ENCODE measurements at regions of chr15 and their contacts with region 1.

Region 1: GRCh38 chr15:52078876-52079700 is 33.5 kb downstream of the BCL2L10 start:
- DNase-seq: peak; percentile 93
- H3K4me3 Mint-ChIP-seq: no peak overlapping the region
- H3K27ac Mint-ChIP-seq: no peak overlapping the region
- H3K4me1 Mint-ChIP-seq: peaks cover 2% of the 10 kb centered on the region
- H3K27me3 Mint-ChIP-seq: no peaks in the 10 kb centered on the region

Region 2: DNA sequence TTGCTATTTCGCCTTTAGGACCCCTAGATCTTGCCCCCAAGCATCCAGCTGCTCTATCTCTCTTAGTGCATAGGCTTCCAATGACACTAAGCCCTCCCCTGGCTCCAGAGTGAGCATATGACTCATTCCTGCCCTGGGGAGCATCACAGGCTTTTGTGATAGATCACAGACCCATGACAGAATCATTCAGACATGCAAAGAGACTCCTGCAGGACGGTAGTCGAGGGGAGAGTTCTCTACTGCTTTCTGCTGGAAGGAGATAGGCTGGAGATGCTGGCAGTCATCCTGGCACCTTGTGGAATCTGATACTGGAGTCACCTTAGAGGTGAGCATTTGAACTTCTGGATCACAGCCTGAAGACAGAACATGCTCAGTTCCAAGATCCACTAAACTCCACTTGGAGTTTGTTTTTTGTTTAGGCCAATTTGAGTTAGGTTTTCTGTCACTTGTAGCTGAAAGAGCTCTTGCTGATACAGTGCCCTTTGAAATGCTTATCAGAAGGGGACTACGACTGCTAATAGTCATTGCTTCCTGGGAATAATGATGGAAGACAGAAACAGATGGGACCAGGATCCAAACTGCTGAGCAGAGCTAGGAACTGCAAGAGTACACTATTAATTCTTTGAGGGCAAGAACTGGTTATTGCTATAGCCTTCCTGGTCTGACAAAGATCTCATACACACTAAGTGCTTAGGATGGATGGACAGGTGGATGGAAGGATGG is 352.6 kb before region 1 on chr15:
- CTCF ChIA-PET with region 1: no interaction called
- intact Hi-C with region 1: no loop called
- DNase-seq: peak; percentile 74
- H3K4me3 Mint-ChIP-seq: no peak overlapping the region
- H3K27ac Mint-ChIP-seq: no peak overlapping the region
- H3K4me1 Mint-ChIP-seq: peaks cover 57% of the 10 kb centered on the region
- H3K27me3 Mint-ChIP-seq: no peaks in the 10 kb centered on the region

Region 3: GRCh38 chr15:51888593-51889195 is 190.4 kb before region 1 on chr15:
- CTCF ChIA-PET with region 1: interaction called, 3 read pairs
- intact Hi-C with region 1: loop called (anchors 2 kb)
- DNase-seq: no peak
- H3K4me3 Mint-ChIP-seq: no peak overlapping the region
- H3K27ac Mint-ChIP-seq: no peak overlapping the region
- H3K4me1 Mint-ChIP-seq: peaks cover 2% of the 10 kb centered on the region
- H3K27me3 Mint-ChIP-seq: no peaks in the 10 kb centered on the region

Region 4: GRCh38 chr15:51971375-51972133 is 107.5 kb before region 1 on chr15 and contains the start of gene LEO1:
- CTCF ChIA-PET with region 1: interaction called, 11 read pairs
- intact Hi-C with region 1: no loop called
- DNase-seq: peak; percentile 95
- H3K4me3 Mint-ChIP-seq: peak within 1 kb of the TSS; percentile 90
- H3K27ac Mint-ChIP-seq: peak within 1 kb of the TSS; percentile 96
- H3K4me1 Mint-ChIP-seq: peaks cover 24% of the 10 kb centered on the region
- H3K27me3 Mint-ChIP-seq: peaks cover 2% of the 10 kb centered on the region
- total RNA-seq, gene LEO1: 21.0 to 23.8 TPM

Region 5: DNA sequence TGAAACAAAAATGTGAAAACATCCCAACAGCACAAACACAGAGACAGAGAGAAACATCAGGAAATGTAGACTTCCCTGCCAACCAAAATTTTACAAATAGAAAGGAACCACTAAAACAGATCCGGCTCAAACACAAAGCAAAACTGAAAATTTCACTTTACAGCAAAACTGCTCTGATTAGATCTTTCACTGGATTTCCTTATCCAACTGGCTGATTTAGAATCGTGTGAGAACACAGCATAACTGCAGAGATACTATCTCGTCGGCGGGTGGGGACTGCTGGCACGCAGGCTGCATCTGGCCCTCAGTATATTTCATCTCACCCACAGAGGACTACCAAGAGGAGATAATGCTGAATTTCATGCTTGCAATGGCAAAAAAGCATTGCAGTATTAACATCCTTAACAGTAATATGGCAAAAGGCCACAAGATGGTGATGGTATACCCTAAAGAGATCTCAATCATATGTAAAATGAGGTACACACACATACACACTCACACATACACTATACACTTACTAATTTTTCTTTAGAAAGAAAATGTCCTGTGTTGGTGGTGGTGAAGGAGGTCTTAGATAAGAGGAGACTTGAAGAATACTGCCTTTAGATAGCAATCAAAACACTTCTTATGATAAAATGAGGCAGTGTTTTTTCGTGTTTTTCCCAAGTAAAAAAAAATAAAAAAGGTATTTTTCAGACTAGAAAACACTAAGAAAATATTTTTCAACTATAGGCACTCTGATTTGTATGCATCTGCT is 96.9 kb before region 1 on chr15:
- CTCF ChIA-PET with region 1: interaction called, 53 read pairs
- intact Hi-C with region 1: loop called (anchors 1 kb)
- DNase-seq: peak; percentile 52
- H3K4me3 Mint-ChIP-seq: peak overlapping the region; percentile 62
- H3K27ac Mint-ChIP-seq: peak overlapping the region; percentile 25
- H3K4me1 Mint-ChIP-seq: peaks cover 10% of the 10 kb centered on the region
- H3K27me3 Mint-ChIP-seq: no peaks in the 10 kb centered on the region

Region 6: DNA sequence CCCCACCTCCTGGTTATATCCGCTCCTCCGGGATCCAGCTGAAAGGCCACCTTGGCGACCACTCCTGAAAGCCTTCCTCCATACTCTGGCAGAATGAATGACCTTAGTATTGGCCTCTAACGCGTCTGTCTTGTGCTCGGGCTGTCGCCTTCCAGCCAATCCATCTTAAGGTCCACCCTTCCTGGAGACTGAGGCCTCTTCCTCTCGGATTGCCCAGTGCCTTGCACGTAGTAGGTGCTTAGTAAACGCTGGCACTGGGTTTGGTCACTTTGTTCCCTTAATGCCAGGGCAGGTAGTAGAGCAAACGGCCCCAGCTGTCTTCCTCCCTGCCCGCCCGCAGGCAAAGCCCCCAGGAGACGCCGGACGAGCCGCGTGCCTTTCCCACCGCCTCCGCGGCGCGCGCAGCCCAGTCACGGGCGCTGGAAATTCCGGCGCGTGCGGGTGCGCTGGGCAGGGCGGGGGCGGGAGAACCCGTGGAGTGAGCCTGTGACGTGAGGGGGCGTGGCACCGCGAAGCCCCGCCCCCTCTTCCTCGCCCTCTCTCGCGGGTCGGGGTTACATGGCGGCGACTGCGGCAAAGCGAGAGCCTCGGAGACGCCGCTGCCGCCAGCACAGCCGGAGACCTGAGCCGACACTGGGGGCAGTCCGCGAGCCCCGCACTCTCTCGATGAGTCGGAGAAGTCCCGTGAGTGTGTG is 60.2 kb before region 1 on chr15 and contains the start of gene MAPK6:
- CTCF ChIA-PET with region 1: no interaction called
- intact Hi-C with region 1: no loop called
- DNase-seq: peak; percentile 93
- H3K4me3 Mint-ChIP-seq: peak within 1 kb of the TSS; percentile 97
- H3K27ac Mint-ChIP-seq: peak within 1 kb of the TSS; percentile 97
- H3K4me1 Mint-ChIP-seq: peaks cover 37% of the 10 kb centered on the region
- H3K27me3 Mint-ChIP-seq: no peaks in the 10 kb centered on the region
- total RNA-seq, gene MAPK6: 16.7 to 17.2 TPM

Region 7: DNA sequence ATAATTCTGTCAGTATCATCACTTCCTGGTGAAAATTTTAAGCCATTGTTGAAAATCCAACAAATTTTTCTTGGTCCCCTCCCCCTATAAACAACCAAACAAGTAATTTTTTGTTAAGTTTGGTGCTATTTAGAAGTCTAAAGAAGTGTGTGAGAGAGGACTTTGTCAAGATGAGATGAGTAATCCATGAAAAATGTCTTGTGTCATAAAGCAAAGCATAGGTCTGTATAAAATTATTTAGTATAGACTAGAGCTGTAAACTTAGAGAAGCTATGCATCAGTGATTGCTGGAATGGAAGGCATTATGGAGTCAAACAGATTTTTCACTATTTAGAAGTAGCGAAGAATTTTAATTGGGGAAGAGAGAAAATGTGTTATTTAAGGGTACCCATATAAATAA is 28.7 kb before region 1 on chr15:
- CTCF ChIA-PET with region 1: interaction called, 5 read pairs
- intact Hi-C with region 1: loop called (anchors 2 kb)
- DNase-seq: no peak
- H3K4me3 Mint-ChIP-seq: no peak overlapping the region
- H3K27ac Mint-ChIP-seq: no peak overlapping the region
- H3K4me1 Mint-ChIP-seq: peaks cover 15% of the 10 kb centered on the region
- H3K27me3 Mint-ChIP-seq: no peaks in the 10 kb centered on the region

Region 8: GRCh38 chr15:52068004-52068615 is 11.0 kb before region 1 on chr15:
- CTCF ChIA-PET with region 1: interaction called, 25 read pairs
- intact Hi-C with region 1: no loop called
- DNase-seq: no peak
- H3K4me3 Mint-ChIP-seq: no peak overlapping the region
- H3K27ac Mint-ChIP-seq: no peak overlapping the region
- H3K4me1 Mint-ChIP-seq: peaks cover 15% of the 10 kb centered on the region
- H3K27me3 Mint-ChIP-seq: no peaks in the 10 kb centered on the region

Region 9: DNA sequence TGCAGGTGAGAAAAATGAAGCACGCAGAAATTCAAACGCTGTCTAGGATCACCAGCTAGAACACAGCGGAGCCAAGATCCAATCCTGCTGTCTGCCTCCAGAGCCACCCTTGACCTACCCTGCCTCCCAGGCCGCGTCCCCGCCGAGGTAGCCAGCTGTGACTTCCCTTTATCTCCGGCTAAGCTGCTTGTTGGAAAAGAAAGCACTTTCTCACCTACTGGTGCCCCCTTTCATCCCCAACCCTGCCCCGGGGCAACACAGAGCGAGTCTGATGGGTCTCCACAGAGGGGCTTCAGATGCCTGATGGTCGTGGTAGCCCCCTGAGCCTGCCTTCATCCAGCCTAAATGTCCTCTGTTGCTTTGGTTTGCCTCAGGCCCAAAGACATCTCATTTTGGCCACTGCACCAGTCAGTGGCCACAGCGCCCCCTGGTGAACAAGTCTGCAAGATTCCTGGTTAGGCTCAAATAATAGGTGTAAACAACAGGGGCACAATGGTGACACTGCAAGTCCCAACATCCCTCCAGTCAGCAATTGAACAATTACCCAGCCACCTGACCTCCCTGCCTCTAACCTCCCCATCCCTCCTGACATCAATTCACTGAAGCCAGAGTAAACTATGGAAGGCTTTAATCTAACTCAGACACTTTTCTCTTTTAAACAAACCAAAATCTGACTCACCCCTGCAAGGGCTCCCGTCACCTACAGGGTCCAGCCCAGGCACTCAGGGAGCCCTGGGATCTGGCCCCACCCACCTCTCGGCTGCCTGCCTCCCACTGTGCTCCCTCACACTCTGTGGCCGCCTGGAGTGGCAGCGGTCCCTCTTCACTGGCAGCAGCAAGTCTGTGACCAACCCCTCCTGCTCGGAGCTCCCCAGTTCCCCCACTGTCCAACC is 60.8 kb after region 1 on chr15:
- CTCF ChIA-PET with region 1: interaction called, 9 read pairs
- intact Hi-C with region 1: loop called (anchors 2 kb)
- DNase-seq: peak; percentile 82
- H3K4me3 Mint-ChIP-seq: no peak overlapping the region
- H3K27ac Mint-ChIP-seq: no peak overlapping the region
- H3K4me1 Mint-ChIP-seq: peaks cover 18% of the 10 kb centered on the region
- H3K27me3 Mint-ChIP-seq: no peaks in the 10 kb centered on the region

Region 10: DNA sequence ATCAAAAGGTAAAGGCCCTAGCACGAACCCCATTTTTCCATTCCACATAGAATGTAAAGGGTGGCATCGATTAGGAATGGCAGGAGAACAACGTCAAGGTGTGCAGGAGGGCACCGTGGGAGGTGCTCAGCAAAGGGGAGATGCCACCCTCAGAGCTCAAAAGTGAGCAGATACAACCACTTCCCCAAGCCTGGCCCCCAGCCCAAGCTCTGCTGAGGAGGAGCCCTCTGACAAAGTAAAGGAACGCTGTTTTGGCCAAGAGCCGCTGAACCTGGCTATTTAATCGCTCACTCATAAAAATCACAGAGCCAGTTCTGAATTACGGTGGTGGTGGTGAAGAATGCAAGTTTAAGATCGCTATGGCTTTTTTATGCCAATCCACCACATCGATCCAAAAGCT is 99.7 kb after region 1 on chr15:
- CTCF ChIA-PET with region 1: no interaction called
- intact Hi-C with region 1: no loop called
- DNase-seq: no peak
- H3K4me3 Mint-ChIP-seq: peak overlapping the region; percentile 87
- H3K27ac Mint-ChIP-seq: peak overlapping the region; percentile 80
- H3K4me1 Mint-ChIP-seq: peaks cover 19% of the 10 kb centered on the region
- H3K27me3 Mint-ChIP-seq: no peaks in the 10 kb centered on the region

Measured in activated naive CD4-positive, alpha-beta T cell treated with anti-CD3 and anti-CD28 coated beads for 36 hours (primary cell).